ENCODE measurements at regions of chr1 and their contacts with region 1.

Region 1: DNA sequence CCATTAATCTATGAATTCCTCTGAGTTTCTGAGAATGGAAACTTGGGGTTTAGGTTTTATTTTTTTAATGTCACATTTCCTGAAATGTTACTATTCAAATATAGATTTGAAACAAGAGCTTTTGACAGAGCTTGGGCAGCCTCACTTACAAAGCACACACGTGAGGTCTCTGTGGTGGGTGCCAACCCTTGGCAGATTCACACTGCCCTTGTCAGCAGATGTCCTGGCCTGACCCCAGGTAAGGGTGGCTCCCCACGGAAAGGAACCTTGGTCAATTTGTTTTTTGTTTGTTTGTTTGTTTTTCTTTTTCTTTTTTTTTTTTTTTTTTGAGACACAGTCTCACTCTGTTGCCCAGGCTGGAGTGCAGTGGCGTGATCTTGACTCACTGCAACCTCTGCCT is 53.5 kb downstream of the FAAP20 start:
- DNase-seq: no peak
- ATAC-seq: peak; percentile 35
- H3K4me3 Mint-ChIP-seq: no peak overlapping the region
- H3K27ac Mint-ChIP-seq: no peak overlapping the region
- H3K4me1 Mint-ChIP-seq: peaks cover 22% of the 10 kb centered on the region
- H3K27me3 Mint-ChIP-seq: no peaks in the 10 kb centered on the region
- CTCF ChIP-seq: no peak

Region 2: GRCh38 chr1:1968767-1969504 is 172.1 kb before region 1 on chr1:
- CTCF ChIA-PET with region 1: no interaction called
- POLR2A ChIA-PET with region 1: no interaction called
- intact Hi-C with region 1: no loop called
- DNase-seq: no peak
- ATAC-seq: no peak
- H3K4me3 Mint-ChIP-seq: no peak overlapping the region
- H3K27ac Mint-ChIP-seq: no peak overlapping the region
- H3K4me1 Mint-ChIP-seq: no peaks in the 10 kb centered on the region
- H3K27me3 Mint-ChIP-seq: no peaks in the 10 kb centered on the region
- CTCF ChIP-seq: no peak

Region 3: DNA sequence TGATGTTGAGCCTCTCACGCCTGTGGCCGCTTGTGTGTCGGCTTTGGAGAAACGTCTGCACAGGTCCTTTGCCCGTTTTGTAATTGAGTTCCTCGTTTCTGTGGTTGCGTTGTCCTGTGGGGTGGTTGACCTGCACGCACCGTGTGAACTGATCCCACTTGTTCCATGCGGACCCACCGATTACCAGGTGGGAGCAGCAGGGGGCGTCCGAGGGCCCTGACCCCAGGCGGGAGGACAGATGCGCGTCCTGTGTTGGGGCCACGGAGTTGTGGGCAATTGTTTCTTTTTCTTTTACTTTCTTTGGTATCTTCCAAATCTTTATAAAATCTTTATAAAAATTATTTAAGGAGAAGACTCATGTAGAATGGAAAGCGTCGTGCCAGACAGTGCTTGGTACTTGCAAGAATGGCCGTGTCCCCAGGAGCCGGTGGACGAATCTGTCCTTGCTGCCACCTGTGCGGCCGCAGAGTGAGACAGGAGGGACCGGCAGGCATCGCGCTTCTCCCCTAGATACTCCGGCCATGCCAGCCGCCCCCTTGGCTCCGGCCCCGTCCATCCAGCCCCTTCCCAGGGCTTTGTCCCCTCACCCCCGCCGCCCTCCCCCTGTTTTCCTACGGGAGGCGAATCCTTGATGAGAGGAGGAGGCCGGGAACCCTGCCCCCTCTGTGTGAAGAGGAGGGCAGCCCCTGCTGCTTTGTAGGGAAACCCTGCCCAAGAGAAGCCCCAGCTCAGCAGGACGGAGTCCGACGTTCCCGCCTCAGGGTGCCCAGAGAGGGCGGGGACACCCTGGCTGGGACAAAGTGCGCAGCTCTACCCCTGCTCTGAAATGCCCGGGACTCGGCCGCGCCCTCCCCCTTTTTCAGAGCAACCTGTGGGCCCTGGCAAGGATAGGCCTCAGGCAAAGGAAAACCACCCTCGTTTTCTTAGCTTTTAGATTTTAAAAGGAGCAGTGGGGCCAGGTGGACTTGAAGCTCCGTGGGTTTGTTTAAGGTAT is 49.1 kb before region 1 on chr1:
- CTCF ChIA-PET with region 1: interaction called, 10 read pairs
- POLR2A ChIA-PET with region 1: no interaction called
- intact Hi-C with region 1: no loop called
- DNase-seq: peak; percentile 74
- ATAC-seq: peak; percentile 80
- H3K4me3 Mint-ChIP-seq: no peak overlapping the region
- H3K27ac Mint-ChIP-seq: no peak overlapping the region
- H3K4me1 Mint-ChIP-seq: peaks cover 2% of the 10 kb centered on the region
- H3K27me3 Mint-ChIP-seq: no peaks in the 10 kb centered on the region
- CTCF ChIP-seq: peak; percentile 80

Region 4: GRCh38 chr1:2127187-2128145 is 13.6 kb before region 1 on chr1:
- CTCF ChIA-PET with region 1: interaction called, 18 read pairs
- POLR2A ChIA-PET with region 1: no interaction called
- intact Hi-C with region 1: no loop called
- DNase-seq: no peak
- ATAC-seq: no peak
- H3K4me3 Mint-ChIP-seq: peak overlapping the region; percentile 43
- H3K27ac Mint-ChIP-seq: peak overlapping the region; percentile 78
- H3K4me1 Mint-ChIP-seq: peaks cover 18% of the 10 kb centered on the region
- H3K27me3 Mint-ChIP-seq: no peaks in the 10 kb centered on the region
- CTCF ChIP-seq: no peak